ENCODE measurements at regions of chr17 and their contacts with region 1.

Region 1: GRCh38 chr17:75855310-75856081 is at the start of gene WBP2:
- DNase-seq: peak; percentile 84
- ATAC-seq: peak; percentile 87
- H3K4me3 Mint-ChIP-seq: no peak within 1 kb of the TSS
- H3K27ac Mint-ChIP-seq: peak within 1 kb of the TSS; percentile 79
- H3K4me1 Mint-ChIP-seq: peaks cover 48% of the 10 kb centered on the region
- H3K27me3 Mint-ChIP-seq: no peaks in the 10 kb centered on the region
- CTCF ChIP-seq: no peak
- total RNA-seq, gene WBP2: 66.0 and 68.7 TPM in 2 replicates

Region 2: DNA sequence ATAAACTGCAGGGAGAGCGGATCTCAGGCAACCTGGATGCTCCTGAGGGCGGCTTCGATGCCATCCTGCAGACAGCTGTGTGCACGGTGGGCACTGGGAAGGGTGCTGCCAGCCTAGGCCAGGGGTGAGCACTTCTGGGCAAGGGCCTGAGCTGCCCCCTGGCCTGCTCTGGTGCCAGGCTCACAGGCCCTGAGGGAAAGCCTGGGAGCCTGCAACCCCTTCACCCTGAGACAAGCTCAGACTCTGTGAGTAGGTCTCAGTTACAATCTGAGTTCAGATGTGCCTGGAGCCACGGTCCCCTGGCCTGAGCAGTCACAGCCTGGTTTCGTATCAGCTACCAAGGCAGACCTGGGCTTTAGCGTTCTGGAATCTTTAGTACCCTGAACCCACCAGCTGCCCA is 126.1 kb before region 1 on chr17:
- CTCF ChIA-PET with region 1: no interaction called
- POLR2A ChIA-PET with region 1: no interaction called
- intact Hi-C with region 1: no loop called
- DNase-seq: no peak
- ATAC-seq: no peak
- H3K4me3 Mint-ChIP-seq: no peak overlapping the region
- H3K27ac Mint-ChIP-seq: no peak overlapping the region
- H3K4me1 Mint-ChIP-seq: peaks cover 1% of the 10 kb centered on the region
- H3K27me3 Mint-ChIP-seq: no peaks in the 10 kb centered on the region
- CTCF ChIP-seq: no peak

Region 3: DNA sequence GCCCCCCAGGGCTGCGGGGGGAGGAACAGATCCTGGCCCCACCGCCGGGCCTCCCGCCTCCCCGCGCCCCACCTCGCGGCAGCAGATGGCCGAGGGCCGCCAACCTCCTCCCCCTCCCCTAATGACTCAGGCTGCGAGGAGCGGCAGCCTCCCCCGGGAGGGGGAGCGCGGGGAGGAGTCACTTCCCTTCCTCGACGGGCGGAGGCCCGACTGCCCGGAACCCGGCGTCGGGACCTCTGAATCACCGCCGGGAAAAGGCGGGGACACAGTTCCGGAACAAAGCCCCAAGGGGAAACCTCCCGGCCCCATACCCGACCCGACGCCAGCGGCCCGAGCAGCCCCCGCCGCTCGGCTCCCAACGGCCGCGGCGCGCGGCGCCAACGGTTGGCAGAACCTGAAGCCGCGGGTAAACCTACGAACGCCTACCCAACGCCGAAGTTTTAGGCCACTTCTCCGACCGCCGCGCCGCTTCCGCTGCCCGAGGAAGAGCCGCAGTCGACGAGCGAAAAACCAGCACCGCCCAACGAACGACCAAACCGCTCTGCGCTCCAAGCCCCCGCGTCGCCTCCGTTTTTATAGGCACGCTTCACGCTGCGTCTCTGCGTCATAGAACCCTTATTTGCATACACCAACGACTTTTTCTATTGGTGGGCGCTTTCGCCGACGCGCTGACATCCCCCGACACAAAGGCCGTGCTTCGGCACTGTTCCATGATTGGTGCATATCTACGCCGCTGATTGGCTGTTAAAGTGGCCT is 76.1 kb before region 1 on chr17:
- CTCF ChIA-PET with region 1: no interaction called
- POLR2A ChIA-PET with region 1: interaction called, 71 read pairs
- intact Hi-C with region 1: loop called (anchors 1 kb)
- DNase-seq: peak; percentile 87
- ATAC-seq: peak; percentile 64
- H3K4me3 Mint-ChIP-seq: peak overlapping the region; percentile 89
- H3K27ac Mint-ChIP-seq: peak overlapping the region; percentile 94
- H3K4me1 Mint-ChIP-seq: peaks cover 60% of the 10 kb centered on the region
- H3K27me3 Mint-ChIP-seq: no peaks in the 10 kb centered on the region
- CTCF ChIP-seq: no peak

Region 4: DNA sequence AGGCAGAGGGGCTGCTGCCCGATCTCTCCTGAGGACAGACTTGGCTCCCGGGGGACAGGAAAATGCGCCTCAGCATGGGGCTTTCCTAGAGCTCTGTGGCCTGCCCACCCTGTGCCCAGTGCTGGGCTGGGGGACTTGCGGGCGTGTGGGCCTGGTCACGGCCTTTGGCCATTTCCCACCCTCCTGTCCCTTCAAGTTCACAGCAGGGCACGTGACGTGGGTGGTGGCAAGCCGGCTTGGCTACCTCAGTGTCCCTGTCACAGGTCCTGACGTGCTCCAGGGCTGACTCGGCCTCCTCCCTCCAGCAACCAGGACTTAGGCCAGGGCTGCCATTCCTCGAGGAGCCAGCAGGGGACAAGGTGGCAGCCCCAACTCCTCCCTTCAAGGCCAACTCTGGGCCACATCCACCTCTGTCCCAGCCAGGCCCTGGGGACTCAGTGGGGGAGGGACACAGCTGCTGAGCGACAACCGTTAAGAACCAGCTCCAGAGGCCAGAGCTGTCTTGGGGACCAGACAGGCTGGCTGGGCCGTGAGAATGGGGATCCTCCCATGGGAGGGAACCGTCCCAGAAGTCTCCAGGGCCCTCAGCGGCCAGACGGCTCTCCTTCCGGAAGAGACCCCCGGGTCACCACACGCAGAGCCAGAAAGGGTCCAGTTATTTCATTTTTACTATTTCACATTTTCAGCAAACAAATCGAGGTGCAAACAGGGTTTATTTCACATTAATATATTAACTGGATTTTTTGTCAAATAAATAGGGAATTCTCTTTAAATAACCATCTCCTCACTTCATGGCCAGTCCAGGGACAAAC is 10.2 kb before region 1 on chr17:
- CTCF ChIA-PET with region 1: interaction called, 11 read pairs
- POLR2A ChIA-PET with region 1: interaction called, 101 read pairs
- intact Hi-C with region 1: loop called (anchors 1 kb)
- DNase-seq: peak; percentile 71
- ATAC-seq: peak; percentile 90
- H3K4me3 Mint-ChIP-seq: peak overlapping the region; percentile 66
- H3K27ac Mint-ChIP-seq: peak overlapping the region; percentile 75
- H3K4me1 Mint-ChIP-seq: peaks cover 29% of the 10 kb centered on the region
- H3K27me3 Mint-ChIP-seq: no peaks in the 10 kb centered on the region
- CTCF ChIP-seq: no peak

Region 5: GRCh38 chr17:75904749-75905521 is 49.4 kb after region 1 on chr17 and contains the start of gene MRPL38:
- CTCF ChIA-PET with region 1: interaction called, 4 read pairs
- POLR2A ChIA-PET with region 1: interaction called, 14 read pairs
- intact Hi-C with region 1: loop called (anchors 1 kb)
- DNase-seq: peak; percentile 97
- ATAC-seq: peak; percentile 97
- H3K4me3 Mint-ChIP-seq: peak within 1 kb of the TSS; percentile 90
- H3K27ac Mint-ChIP-seq: peak within 1 kb of the TSS; percentile 92
- H3K4me1 Mint-ChIP-seq: peaks cover 11% of the 10 kb centered on the region
- H3K27me3 Mint-ChIP-seq: no peaks in the 10 kb centered on the region
- CTCF ChIP-seq: peak; percentile 61
- total RNA-seq, gene MRPL38: 132 and 137 TPM in 2 replicates

Region 6: GRCh38 chr17:75959051-75959838 is 103.7 kb after region 1 on chr17:
- CTCF ChIA-PET with region 1: no interaction called
- POLR2A ChIA-PET with region 1: no interaction called
- intact Hi-C with region 1: no loop called
- DNase-seq: no peak
- ATAC-seq: no peak
- H3K4me3 Mint-ChIP-seq: no peak overlapping the region
- H3K27ac Mint-ChIP-seq: no peak overlapping the region
- H3K4me1 Mint-ChIP-seq: peaks cover 6% of the 10 kb centered on the region
- H3K27me3 Mint-ChIP-seq: no peaks in the 10 kb centered on the region
- CTCF ChIP-seq: no peak

Region 7: DNA sequence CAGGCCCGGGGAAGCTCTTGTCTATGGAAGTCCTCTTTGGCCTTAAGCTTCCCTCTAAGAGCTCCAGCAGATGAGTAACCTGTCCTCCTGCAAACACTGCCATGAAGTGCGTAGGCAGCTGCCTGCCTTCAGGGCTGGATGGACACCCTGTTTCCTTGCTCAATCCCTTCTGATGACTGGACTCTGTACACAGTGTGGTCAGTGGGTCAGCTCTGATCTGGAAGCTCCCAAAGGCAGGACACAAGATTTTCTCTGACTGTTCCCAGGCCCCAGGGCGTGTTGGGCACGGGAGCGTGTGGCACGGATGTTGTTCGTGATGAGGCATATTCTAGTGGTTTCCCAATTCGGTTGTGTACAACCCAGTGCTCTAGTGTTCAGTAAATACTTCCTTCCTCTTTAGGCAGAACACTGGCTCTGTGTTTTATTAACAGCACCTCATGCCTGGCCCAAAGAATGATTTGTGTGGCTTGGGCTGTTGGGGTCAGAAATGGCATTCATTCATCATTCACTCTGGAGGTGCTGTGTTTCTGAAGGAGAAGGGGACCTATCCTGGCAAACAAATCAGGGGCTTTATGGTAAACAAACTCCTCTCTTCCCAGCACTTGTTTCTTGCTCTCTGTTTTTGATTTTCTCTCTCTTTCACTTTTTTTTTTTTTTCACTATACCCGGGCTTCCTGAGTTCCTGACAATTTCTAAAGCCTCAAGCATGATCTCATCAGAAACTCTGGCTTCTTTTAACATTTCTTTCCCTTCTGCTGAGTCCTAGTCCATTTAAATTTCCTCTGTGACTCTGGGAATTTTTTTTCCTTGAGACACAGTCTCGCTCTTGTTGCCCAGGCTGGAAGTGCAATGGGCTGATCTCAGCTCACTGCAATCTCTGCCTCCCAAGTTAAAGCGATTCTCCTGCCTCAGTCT is 396.8 kb after region 1 on chr17:
- CTCF ChIA-PET with region 1: no interaction called
- POLR2A ChIA-PET with region 1: interaction called, 10 read pairs
- intact Hi-C with region 1: no loop called
- DNase-seq: no peak
- ATAC-seq: peak; percentile 97
- H3K4me3 Mint-ChIP-seq: peak overlapping the region; percentile 73
- H3K27ac Mint-ChIP-seq: peak overlapping the region; percentile 85
- H3K4me1 Mint-ChIP-seq: peaks cover 41% of the 10 kb centered on the region
- H3K27me3 Mint-ChIP-seq: no peaks in the 10 kb centered on the region
- CTCF ChIP-seq: no peak

Region 8: DNA sequence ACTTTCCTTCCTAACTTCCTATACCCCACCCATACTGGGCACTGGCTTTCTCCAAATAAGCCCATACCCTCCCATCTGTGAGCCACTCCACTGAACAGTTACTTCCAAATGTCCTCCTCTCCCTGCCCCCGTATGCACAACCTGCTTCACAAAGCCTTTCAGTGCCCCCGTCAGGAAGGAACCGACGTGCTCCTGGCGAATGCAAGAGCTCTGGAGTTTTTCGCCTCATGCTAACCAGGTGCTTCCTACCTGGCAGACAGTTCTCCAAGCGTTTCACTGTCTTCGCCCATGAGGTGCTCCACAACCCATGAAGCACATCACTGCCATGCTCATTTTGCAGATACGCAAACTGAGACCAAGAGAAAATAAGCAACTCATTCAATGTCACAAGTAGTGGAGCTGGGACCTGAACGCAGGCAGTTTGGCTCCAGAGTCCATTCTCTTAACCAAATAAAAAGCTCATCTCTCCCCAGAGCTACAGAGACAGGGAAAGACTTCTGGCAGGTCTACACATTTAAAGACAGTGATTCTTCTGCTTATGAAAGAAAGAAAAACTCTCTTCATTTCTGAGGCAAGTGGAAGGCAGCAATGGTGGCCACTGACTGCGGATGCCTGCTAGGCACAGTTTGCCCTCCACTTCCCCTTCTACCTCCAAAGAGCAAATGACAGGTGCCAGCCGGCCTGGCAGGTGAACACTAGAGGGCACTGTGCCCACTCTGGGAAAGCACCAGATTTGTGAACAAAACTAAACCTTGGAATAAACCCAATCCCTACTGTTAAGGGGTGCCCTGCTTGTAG is 552.8 kb after region 1 on chr17:
- CTCF ChIA-PET with region 1: no interaction called
- POLR2A ChIA-PET with region 1: interaction called, 10 read pairs
- intact Hi-C with region 1: no loop called
- DNase-seq: peak; percentile 63
- ATAC-seq: peak; percentile 80
- H3K4me3 Mint-ChIP-seq: peak overlapping the region; percentile 35
- H3K27ac Mint-ChIP-seq: peak overlapping the region; percentile 30
- H3K4me1 Mint-ChIP-seq: peaks cover 47% of the 10 kb centered on the region
- H3K27me3 Mint-ChIP-seq: no peaks in the 10 kb centered on the region
- CTCF ChIP-seq: peak; percentile 85